PC-9 (cell line): ENCODE measurements at regions of chr7 and their contacts with region 1.

Region 1: DNA sequence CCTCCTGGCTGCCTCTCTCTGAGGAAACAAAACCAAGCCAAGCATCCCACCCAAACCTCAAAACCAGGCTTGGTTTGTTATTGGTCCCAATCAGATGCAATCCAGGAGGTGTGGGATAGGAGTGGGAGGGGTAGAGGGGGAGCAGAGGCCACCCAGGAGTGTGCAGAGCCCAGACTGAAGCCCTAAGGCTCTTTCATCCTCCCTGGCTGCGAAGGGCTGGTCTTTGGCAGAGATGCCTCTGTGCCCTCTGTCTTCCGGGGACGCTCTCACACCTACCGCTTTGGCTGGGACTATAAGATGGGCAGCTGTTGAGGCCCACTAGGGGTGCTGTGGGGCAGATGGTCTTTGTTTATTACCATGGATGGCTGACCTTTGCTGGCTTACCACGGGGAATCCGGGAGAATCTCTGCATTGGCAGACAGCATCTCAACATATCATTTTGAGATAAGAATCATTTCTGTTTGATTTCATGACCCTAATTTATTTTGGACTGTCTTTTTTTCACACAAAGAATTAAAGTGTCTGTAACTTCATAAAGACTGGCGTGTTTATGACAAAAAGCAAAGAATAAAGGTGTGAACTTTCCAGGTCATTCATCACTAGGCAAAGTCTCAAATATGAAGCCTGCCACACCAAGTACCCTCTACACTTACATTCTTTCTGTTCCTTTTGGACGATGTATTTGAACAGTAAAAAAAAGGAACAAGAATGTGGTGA is 6.5 kb upstream of the DENND2A start:
- DNase-seq: no peak
- H3K4me3 ChIP-seq: no peak overlapping the region
- H3K27ac ChIP-seq: no peak overlapping the region
- H3K4me1 ChIP-seq: peaks cover 32% of the 10 kb centered on the region
- H3K27me3 ChIP-seq: no peaks in the 10 kb centered on the region
- CTCF ChIP-seq: peak; percentile 55

Region 2: DNA sequence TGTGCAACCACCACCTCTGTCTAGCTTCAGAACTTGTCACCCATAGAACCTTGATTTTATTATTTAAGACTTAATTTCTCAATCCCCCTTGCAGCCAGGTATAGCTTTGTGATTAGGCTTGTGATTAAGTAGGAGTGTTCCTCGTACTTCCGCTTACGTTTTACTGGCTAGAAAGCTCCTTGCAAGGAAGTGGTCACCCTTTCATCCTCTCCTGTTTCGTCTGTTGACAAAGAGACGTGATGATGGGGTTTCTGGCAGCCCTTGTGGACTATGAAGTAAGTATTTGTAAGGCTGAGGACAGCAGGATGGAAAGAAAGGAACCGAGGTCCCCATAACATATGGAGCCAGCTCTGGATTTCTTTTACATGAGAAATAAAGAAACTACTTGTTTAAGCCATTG is 383.8 kb before region 1 on chr7:
- CTCF ChIA-PET with region 1: no interaction called
- POLR2A ChIA-PET with region 1: no interaction called
- intact Hi-C with region 1: no loop called
- DNase-seq: no peak
- H3K4me3 ChIP-seq: no peak overlapping the region
- H3K27ac ChIP-seq: no peak overlapping the region
- H3K4me1 ChIP-seq: no peaks in the 10 kb centered on the region
- H3K27me3 ChIP-seq: no peaks in the 10 kb centered on the region
- CTCF ChIP-seq: no peak

Region 3: DNA sequence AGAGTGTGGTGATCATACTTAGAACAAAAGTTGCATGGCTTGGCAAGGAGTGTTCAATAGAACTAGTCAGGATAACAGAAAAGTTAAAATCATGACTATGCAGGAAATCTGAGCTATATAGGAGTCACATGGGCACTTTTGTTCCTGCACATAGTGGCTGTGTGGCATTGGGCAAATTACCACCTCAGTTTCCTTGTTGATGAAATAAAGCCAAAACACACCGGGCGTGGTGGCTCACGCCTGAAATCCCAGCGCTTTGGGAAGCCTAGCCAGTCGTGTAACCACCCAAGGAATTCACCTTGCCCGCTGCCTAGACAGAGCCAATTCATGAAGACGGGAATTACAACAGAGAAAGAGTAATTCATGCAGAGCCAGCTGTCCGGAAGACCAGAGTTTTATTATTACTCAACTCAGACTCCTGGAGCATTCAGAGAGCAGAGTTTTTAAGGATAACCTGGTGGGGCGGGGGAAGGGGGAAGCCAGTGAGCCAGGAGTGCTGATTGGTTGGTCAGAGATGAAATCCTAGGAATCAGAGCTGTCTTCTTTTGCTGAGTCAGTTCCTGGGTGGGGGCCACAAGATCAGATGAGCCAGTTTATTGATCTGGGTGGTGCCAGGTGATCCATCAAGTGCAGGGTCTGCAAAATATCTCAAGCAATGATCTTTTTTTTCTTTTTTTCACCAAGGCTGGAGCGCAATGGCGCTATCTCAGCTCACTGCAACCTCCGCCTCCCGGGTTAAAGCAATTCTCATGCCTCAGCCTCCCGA is 161.4 kb before region 1 on chr7:
- CTCF ChIA-PET with region 1: interaction called, 13 read pairs
- POLR2A ChIA-PET with region 1: no interaction called
- intact Hi-C with region 1: no loop called
- DNase-seq: peak; percentile 44 to 89
- H3K4me3 ChIP-seq: no peak overlapping the region
- H3K27ac ChIP-seq: peak overlapping the region; percentile 85
- H3K4me1 ChIP-seq: peaks cover 23% of the 10 kb centered on the region
- H3K27me3 ChIP-seq: no peaks in the 10 kb centered on the region
- CTCF ChIP-seq: no peak